Left colon (tissue), 2 donors: ENCODE measurements at regions of chr10 and their contacts with region 1.

Region 1: GRCh38 chr10:37976091-37976879 is at the start of gene ZNF25:
- DNase-seq: peak; percentile 99
- ATAC-seq: peak; percentile 95
- total RNA-seq, gene ZNF25: 2.7 to 5.0 TPM

Region 2: DNA sequence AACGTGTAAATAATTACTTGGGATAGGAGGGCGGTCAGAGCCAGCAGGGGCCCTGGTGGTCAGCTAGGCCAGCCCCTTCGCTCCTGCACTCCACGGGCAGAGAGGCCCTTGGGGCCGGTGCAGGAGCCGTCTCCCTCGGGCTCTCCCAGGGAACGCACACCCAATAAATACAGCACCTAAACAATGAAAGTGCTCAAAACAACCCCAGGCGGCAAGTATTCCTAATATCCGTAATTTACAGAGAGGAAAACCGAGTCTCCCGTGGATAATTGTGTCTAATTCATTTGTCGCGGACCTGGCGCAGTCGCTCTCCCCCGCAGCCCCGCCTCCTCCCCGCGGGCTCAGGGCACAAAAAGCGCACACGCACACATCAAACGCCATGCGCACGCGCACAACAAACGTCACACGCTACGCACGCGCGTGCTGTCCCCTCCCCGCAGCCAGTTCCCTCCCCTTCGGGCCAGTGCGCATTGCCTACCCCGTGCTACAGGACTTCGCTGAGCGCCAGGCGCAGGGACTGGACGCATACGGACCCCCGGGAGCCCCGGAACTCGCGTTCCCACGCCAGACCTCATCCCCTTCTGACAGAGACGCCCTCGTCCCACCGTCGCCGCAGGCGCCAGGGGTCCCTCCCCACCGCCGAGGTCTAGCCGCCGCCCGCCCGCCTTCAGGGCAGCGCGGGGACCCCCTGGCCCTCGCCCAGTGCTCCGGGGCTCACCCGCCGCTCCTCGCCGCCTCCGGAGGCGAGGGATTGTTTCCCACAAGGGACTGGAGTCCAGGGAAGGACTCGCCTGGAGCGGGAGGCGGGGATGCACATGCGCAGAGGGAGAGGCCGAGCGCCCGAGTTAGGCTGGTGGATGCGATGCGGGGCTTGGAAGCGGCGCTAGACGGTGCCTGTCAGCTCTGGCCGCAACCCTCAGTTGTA is 118.7 kb before region 1 on chr10 and contains the start of gene ZNF248:
- intact Hi-C with region 1: loop called in 1 of 2 experiments (anchors 10 kb)
- DNase-seq: peak; percentile 97
- ATAC-seq: peak; percentile 97
- total RNA-seq, gene ZNF248: 8.4 to 11.6 TPM

Region 3: DNA sequence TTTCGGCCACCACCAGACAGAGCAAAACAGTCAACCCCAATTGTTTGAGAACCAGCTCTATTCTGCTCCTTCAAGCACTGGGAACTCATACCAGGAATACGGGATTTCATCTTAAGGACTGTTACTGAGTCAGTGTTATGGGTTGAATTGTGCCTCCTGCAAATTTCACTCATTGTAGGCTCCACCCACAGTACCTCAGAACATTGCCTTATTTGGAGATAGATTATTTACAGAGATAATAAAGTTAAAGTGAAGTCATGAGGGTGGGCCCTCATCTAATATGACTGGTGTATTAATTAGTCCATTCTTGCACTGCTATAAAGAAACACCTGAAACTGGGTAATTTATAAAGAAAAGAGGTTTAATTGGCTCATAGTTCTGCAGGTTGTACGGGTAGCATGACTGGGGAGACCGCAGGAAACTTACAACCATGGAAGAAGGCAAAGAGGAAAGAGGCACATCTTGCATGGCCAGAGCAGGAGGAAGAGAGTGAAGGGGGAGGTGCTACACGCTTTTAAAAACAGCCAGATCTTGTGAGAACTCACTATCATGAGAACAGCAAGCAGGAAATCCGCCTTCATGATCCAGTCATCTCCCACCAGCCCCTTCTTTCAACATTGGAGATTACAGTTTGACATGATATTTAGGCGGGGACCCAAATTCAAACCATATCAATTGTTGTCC is 104.6 kb before region 1 on chr10:
- intact Hi-C with region 1: no loop called
- DNase-seq: no peak
- ATAC-seq: no peak

Region 4: DNA sequence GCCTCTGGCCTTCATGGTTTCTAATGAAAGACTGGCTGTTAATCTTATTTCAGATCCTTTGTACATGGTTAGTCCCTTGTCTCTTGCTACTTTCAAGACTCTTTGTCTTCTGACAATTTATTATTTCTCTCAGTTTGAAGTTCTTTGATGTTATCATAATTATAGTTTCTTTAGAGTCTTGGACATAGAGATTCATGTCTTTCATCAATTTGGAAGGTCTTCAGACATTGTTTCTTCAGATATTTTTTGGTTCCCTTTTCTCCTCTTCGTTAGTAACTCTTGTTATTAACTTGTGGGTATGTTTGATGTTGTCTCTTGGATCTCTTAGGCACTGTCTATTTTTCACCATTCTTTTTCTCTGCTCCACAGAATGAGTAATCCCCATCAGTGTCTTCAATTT is 126.6 kb after region 1 on chr10:
- intact Hi-C with region 1: no loop called
- DNase-seq: no peak
- ATAC-seq: no peak